AG04449 (cell line): ENCODE measurements at regions of chr11 and their contacts with region 1.

Region 1: GRCh38 chr11:118051611-118052461 is 25.0 kb upstream of the TMPRSS4 start:
- DNase-seq: no peak
- H3K4me3 ChIP-seq: no peak overlapping the region
- CTCF ChIP-seq: no peak

Region 2: DNA sequence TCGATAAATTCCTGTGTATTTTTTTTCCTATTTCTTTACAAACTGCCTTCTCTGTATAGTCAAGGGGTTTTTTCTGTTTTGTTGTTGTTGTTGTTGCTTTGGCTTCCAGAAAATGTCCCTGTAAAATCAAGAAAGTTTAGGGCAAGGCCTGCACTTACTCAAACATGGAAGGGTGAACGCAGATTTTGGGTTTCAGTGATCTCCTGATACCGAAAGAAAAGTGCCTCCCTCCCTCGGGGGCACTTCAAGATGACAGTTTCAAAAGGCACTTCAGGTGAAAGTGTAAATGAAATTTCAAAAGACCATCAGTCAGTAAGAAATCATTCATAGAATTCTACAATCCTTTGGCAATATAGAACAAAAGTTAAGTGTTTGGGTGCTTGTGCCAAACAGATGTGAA is 18.4 kb before region 1 on chr11:
- CTCF ChIA-PET with region 1: interaction called, 10 read pairs
- POLR2A ChIA-PET with region 1: no interaction called
- DNase-seq: no peak
- H3K4me3 ChIP-seq: no peak overlapping the region
- CTCF ChIP-seq: no peak

Region 3: DNA sequence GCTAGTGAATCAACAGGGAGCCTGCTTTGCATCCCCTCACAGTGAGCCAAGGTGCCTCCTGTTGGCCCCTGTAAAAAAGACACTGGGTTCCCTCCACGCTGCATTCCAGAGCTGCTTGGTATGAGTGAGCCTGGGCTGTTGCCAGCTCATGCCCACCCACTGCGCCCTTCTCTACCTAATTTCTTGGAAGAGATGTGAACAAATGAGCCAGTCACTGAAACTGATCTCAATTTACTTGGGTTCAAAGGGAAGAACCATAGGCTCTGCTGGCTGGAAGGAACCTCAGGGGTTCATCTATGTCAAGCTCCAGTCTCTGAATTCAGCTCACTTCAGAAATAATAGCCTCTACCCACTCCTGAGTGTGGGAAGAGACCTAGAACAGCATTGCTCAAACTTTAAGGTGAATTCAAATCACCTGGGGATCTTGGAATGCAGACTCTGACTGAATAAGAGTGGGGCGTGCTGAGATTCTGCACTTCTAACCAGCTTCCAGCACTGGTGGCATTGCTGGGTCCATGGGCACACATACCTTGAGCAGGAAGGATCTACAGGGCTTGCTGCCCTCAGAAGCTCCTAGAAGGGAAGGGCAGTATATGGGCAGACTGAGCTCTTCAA is 19.7 kb after region 1 on chr11:
- CTCF ChIA-PET with region 1: interaction called, 10 read pairs
- POLR2A ChIA-PET with region 1: no interaction called
- DNase-seq: no peak
- H3K4me3 ChIP-seq: no peak overlapping the region
- CTCF ChIP-seq: no peak

Region 4: GRCh38 chr11:118211006-118211405 is 159.2 kb after region 1 on chr11:
- CTCF ChIA-PET with region 1: no interaction called
- POLR2A ChIA-PET with region 1: no interaction called
- DNase-seq: no peak
- H3K4me3 ChIP-seq: no peak overlapping the region
- CTCF ChIP-seq: no peak